SK-N-SH (cell line): ENCODE measurements at regions of chr1 and their contacts with region 1.

Region 1: GRCh38 chr1:5745776-5746610 is 246.2 kb downstream of the NPHP4 start:
- DNase-seq: peak; percentile 92
- H3K4me3 ChIP-seq: no peak overlapping the region; a peak in 1 of 4 replicates
- H3K27ac ChIP-seq: no peak overlapping the region; a peak in 1 of 4 replicates
- H3K4me1 ChIP-seq: peaks cover 0 to 25% of the 10 kb centered on the region in 2 experiments; a peak in 1 of 4 replicates
- H3K27me3 ChIP-seq: no peaks in the 10 kb centered on the region
- CTCF ChIP-seq: peak; percentile 41
- EP300 ChIP-seq: no peak
- RAD21 ChIP-seq: peak; percentile 91

Region 2: GRCh38 chr1:5514519-5515183 is 231.3 kb before region 1 on chr1:
- CTCF ChIA-PET with region 1: interaction called, 138 read pairs
- POLR2A ChIA-PET with region 1: interaction called, 3 read pairs
- DNase-seq: peak; percentile 89
- H3K4me3 ChIP-seq: no peak overlapping the region; a peak in 1 of 4 replicates
- H3K27ac ChIP-seq: no peak overlapping the region
- H3K4me1 ChIP-seq: peaks cover 0 to 19% of the 10 kb centered on the region in 2 experiments; a peak in 1 of 4 replicates
- H3K27me3 ChIP-seq: no peaks in the 10 kb centered on the region
- CTCF ChIP-seq: peak; percentile 83
- EP300 ChIP-seq: no peak
- RAD21 ChIP-seq: peak; percentile 69

Region 3: GRCh38 chr1:5648410-5649165 is 97.4 kb before region 1 on chr1:
- CTCF ChIA-PET with region 1: interaction called, 19 read pairs
- POLR2A ChIA-PET with region 1: no interaction called
- DNase-seq: no peak
- H3K4me3 ChIP-seq: no peak overlapping the region
- H3K27ac ChIP-seq: no peak overlapping the region
- H3K4me1 ChIP-seq: peaks cover 0 to 24% of the 10 kb centered on the region in 2 experiments; a peak in 1 of 4 replicates
- H3K27me3 ChIP-seq: no peaks in the 10 kb centered on the region
- CTCF ChIP-seq: no peak
- EP300 ChIP-seq: no peak
- RAD21 ChIP-seq: no peak

Region 4: DNA sequence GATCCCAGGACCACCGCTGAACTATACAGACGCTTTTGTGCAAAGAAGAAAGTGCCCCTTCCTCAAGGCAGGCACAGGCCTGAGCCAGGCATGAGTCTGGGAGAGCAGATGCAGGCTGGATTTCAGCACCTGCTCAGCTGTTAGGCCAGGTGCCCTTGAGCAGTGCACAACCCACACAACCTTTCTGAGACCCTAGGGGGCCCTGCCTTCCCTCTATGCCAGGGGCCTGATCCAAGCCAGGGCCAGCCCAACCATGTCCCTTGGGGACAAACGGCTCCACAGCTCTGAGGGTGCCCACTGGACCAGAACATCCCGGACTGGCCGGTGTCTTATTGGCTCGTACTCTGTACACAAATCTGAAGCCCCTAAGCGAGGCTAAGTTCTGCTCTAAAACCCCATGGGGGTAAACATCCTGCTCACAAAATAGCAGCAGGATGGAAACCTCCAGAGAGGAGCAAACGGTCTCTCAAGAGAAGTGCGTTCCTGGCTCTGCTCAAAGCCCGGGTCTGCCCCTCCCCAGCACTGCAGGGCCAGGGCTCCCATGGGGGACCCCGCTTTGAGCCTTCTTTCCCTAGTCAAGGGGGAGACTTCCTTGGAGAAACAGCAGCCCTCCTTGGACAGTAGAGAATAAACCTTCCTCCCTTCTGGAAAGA is 28.8 kb before region 1 on chr1:
- CTCF ChIA-PET with region 1: interaction called, 15 read pairs
- POLR2A ChIA-PET with region 1: no interaction called
- DNase-seq: no peak
- H3K4me3 ChIP-seq: no peak overlapping the region
- H3K27ac ChIP-seq: no peak overlapping the region
- H3K4me1 ChIP-seq: peaks cover 0 to 21% of the 10 kb centered on the region in 2 experiments; a peak in 1 of 4 replicates
- H3K27me3 ChIP-seq: no peaks in the 10 kb centered on the region
- CTCF ChIP-seq: no peak
- EP300 ChIP-seq: no peak
- RAD21 ChIP-seq: no peak

Region 5: DNA sequence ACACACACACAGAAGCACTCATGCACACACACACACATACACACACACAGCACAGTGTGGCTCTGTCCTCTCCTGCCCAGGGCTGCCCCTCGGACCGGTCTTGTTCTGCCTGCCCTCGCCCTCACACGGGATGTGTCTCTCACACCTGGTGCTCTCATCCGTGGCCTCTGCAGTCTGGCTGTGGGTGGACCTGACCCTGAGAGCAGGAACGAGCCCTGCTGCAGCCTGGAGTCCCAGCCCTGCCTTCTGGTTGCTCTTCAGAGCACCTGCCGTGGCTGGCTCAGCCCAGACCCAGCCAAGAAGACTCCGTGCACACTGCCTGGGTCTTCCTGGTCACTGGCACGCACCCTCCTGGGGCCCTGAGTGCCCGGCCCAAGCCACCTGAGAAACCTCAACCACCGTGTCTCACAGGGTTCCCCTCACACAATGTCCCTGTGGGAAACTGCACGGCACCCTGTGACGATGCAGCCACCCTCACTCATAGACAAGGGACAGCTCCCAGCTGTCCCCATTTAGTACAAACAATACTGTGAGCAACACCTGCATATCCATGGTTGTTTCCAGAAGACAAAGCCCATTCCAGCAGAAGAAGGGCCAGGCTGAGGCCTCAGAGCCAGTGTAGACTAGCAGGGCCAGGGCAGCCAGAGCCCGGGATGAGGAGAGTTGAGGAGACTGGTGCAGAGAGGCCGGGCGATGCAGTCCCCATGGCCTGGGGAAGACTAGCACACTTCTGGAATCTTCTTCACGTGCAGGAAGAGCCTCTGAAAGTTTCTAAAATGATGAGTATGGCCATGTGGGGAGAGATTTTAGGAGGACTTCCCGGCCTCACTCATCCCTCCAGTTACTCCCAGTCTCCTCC is 12.2 kb after region 1 on chr1:
- CTCF ChIA-PET with region 1: interaction called, 61 read pairs
- POLR2A ChIA-PET with region 1: no interaction called
- DNase-seq: no peak
- H3K4me3 ChIP-seq: no peak overlapping the region
- H3K27ac ChIP-seq: no peak overlapping the region
- H3K4me1 ChIP-seq: no peaks in the 10 kb centered on the region
- H3K27me3 ChIP-seq: no peaks in the 10 kb centered on the region
- CTCF ChIP-seq: no peak
- EP300 ChIP-seq: no peak
- RAD21 ChIP-seq: no peak

Region 6: GRCh38 chr1:5819391-5820025 is 73.5 kb after region 1 on chr1:
- CTCF ChIA-PET with region 1: no interaction called
- POLR2A ChIA-PET with region 1: no interaction called
- DNase-seq: no peak
- H3K4me3 ChIP-seq: no peak overlapping the region
- H3K27ac ChIP-seq: no peak overlapping the region
- H3K4me1 ChIP-seq: no peaks in the 10 kb centered on the region; a peak in 1 of 4 replicates
- H3K27me3 ChIP-seq: no peaks in the 10 kb centered on the region
- CTCF ChIP-seq: no peak
- EP300 ChIP-seq: no peak
- RAD21 ChIP-seq: no peak

Region 7: DNA sequence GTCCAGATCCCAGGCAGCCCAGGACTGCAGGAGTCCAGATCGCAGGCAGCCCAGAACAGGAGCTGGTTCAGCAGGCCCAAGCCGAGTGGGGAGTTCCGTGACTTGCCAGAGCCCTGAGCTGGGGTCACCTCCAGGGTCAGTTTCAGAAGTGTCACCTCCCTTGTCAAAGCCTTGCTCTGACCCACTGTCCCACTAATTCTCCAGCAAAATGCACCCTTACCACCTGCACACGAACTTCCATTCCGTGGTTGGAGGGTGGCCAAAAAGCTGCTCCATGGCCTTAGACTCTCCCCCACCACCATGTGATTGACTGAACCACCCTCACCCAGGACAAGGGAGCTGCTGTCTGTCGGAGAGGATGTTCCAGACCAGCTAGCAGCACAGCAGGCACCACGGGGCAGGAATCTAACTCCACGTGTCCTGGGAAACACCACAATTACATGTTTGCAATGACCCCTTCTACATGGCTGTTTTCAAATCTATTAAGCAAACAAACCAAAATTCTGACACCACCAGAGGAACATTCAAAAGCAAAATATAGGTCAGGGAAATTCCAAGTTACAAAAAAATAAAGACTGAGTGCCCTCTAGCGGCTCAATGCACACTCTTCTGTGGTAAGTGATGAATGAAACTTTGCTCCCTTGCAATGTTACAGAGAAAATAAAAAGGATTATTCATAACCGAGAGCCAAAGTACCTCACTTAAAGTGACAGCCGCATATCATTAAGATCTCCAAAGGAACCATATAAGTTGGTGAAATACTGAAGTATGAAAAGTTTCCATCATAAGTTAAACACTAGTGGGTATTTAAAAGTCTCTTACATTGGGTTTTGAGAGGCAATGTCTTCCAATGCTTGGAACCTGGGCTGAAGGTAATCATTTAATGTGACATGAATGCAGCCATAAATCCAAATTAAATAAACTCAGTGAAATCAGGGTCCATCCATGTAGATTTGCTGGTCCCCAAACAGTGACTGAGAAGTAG is 169.9 kb after region 1 on chr1:
- CTCF ChIA-PET with region 1: interaction called, 29 read pairs
- POLR2A ChIA-PET with region 1: no interaction called
- DNase-seq: peak; percentile 66
- H3K4me3 ChIP-seq: no peak overlapping the region; a peak in 1 of 4 replicates
- H3K27ac ChIP-seq: no peak overlapping the region
- H3K4me1 ChIP-seq: peaks cover 0 to 12% of the 10 kb centered on the region in 2 experiments; a peak in 1 of 4 replicates
- H3K27me3 ChIP-seq: no peaks in the 10 kb centered on the region
- CTCF ChIP-seq: peak; percentile 72
- EP300 ChIP-seq: no peak
- RAD21 ChIP-seq: peak; percentile 84

Region 8: GRCh38 chr1:6001992-6002576 is 256.1 kb after region 1 on chr1:
- CTCF ChIA-PET with region 1: no interaction called
- POLR2A ChIA-PET with region 1: no interaction called
- DNase-seq: peak; percentile 84
- H3K4me3 ChIP-seq: no peak overlapping the region
- H3K27ac ChIP-seq: peak overlapping the region in 1 of 2 experiments; percentile 71; a peak in 2 of 4 replicates
- H3K4me1 ChIP-seq: peaks cover 0 to 43% of the 10 kb centered on the region in 2 experiments; a peak in 1 of 4 replicates
- H3K27me3 ChIP-seq: no peaks in the 10 kb centered on the region
- CTCF ChIP-seq: no peak
- EP300 ChIP-seq: peak in 1 of 2 experiments; percentile 32; a peak in 1 of 4 replicates
- RAD21 ChIP-seq: no peak